Naive thymus-derived CD8-positive, alpha-beta T cell (primary cell): ENCODE measurements at regions of chr2 and their contacts with region 1.

Region 1: GRCh38 chr2:74147727-74148456 is at the start of gene BOLA3:
- DNase-seq: peak; percentile 59 to 86 (median 77)
- ATAC-seq: peak; percentile 88 to 92
- H3K4me3 Mint-ChIP-seq: no peak within 1 kb of the TSS
- H3K27ac Mint-ChIP-seq: no peak within 1 kb of the TSS
- H3K4me1 Mint-ChIP-seq: peaks cover 0 to 4% (median 0%) of the 10 kb centered on the region in 4 donors
- H3K27me3 Mint-ChIP-seq: no peaks in the 10 kb centered on the region
- polyA plus RNA-seq, gene BOLA3: 59.9 to 78.5 (median 68.3) TPM

Region 2: DNA sequence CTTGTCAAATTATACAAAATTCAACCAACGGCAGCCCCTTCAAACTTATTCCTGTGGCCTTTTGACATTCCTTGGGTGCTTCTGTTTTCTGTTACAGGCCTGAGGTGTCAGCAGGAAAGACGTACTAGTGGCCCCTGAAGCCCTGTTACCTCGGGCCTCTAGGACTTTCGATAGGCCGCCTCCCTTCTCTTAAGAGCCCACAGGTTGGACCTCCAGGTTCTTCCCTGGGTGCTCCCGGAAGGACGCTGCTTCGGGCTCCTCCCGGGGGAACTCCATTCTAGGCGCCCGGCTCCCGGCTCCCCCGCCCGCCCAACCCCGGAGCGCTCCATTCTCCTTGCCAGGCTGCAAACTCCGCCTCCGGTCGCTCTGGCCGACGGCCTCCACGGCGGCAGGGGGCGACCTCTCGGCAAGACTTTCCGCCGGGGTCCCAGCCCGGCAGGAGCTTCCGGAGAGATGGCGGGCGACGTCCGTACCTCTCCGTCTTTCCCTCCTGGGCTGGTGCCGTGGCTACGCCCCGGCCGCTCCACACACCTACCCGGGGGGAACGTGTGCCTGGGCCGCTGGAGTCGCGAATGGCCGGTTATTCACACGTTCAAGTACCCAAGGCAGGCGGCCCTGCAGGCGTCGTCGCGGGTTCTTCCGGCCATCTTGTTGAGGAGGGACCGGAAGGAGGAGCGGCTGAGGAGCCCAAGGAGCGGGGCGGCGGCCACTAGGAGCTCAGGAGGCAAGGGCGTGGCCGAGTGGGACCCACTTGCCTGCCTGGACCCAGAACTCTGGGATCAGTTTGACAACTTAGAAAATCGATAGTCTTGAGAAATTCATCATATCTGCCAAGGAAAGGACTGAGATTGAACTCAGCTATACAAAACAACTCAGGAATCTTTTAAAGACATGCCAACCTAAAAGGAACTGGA is 27.7 kb before region 1 on chr2:
- POLR2A ChIA-PET with region 1: interaction called, 12 read pairs
- DNase-seq: peak; percentile 68 to 88 (median 82)
- ATAC-seq: peak; percentile 97
- H3K4me3 Mint-ChIP-seq: peak overlapping the region; percentile 83 to 93 (median 86)
- H3K27ac Mint-ChIP-seq: peak overlapping the region; percentile 72 to 96 (median 93)
- H3K4me1 Mint-ChIP-seq: peaks cover 0 to 7% (median 5%) of the 10 kb centered on the region in 4 donors
- H3K27me3 Mint-ChIP-seq: peaks cover 0 to 4% (median 2%) of the 10 kb centered on the region in 5 donors